Astrocyte of the cerebellum (primary cell): ENCODE measurements at regions of chr12 and their contacts with region 1.

Region 1: DNA sequence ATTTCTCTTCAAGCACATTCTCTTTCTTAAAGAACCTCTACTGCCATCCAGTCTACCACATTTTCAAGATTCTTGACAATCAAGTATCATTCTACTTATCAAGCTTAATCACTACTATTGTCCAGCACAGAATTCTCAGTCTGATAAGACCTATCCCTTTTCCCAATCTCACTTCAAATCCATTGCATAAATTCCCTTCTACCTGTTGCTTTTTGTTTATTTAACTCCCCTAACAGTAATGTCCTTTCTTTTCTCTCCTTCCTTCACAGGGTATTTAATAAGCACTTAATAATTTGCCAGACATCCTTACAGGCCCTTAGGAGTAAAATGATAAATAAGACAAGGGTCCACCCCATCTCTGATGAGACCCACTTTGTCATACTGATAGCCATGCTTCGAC is 41.7 kb downstream of the ZFC3H1 start:
- DNase-seq: no peak
- H3K4me3 ChIP-seq: no peak overlapping the region
- CTCF ChIP-seq: no peak

Region 2: GRCh38 chr12:71652656-71653055 is 30.7 kb after region 1 on chr12:
- in situ Hi-C with region 1: no loop called
- DNase-seq: no peak
- H3K4me3 ChIP-seq: no peak overlapping the region
- CTCF ChIP-seq: no peak

Region 3: GRCh38 chr12:71663561-71664294 is 41.8 kb after region 1 on chr12 and contains the start of gene ZFC3H1:
- in situ Hi-C with region 1: loop called (anchors 5 kb)
- DNase-seq: peak; percentile 99
- H3K4me3 ChIP-seq: peak within 1 kb of the TSS; percentile 73
- CTCF ChIP-seq: peak; percentile 45

Region 4: DNA sequence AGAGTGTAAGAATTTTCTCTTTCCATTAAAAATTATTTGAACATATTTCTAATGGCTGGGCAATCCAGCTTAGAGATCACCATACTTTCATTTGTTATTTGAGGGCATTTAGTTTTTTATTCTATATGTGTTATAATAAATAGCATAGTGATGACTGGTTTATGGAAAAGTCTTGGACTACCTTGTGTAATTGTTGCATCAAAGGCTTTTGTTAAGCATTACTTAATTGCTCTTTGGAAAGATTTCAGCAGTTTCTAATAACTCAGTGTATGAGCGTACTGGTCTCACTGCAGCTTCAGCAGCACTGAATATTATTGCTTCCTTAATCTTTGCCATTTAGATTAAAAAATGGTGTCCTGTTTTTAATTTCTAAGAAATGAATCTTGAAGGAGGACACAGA is 86.7 kb after region 1 on chr12:
- in situ Hi-C with region 1: no loop called
- DNase-seq: no peak
- H3K4me3 ChIP-seq: no peak overlapping the region
- CTCF ChIP-seq: no peak

Region 5: DNA sequence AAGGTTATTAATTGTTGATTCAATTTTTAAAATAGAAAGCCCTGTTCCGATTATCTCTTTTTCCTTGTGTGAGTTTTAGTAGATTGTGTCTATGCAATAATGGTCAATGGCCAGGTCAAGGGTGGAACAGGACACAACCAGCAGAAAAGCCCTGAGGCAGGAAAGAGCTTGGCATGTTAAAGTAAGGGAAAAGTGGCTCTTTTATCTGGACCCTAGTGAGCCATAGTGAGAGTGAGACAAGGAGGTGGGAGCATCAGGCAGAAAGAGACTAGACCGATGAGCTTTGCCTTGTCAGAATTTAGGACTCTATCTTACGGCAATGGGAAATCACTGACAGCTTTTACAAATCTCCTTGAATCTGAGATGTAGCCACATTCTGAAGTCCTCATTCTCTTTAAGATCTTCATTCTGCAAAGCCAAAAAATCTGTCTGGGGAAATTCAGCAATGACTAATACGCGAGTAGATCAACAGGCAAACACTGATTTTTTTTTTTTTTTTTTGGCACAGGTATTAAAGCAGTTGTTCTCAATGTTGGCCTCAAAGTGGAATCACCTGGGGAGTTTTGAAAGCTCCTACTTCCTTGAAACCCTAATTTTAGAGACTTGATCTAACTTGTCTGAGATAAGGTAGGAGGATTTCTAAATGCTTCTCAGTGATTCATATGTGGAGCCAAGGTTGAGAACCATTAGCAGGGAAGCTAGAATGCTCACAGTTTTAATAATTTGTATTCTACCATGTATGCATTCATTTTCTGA is 97.9 kb after region 1 on chr12:
- in situ Hi-C with region 1: loop called (anchors 5 kb)
- DNase-seq: no peak
- H3K4me3 ChIP-seq: no peak overlapping the region
- CTCF ChIP-seq: no peak

Region 6: GRCh38 chr12:72289633-72290032 is 667.7 kb after region 1 on chr12:
- in situ Hi-C with region 1: no loop called
- DNase-seq: no peak
- H3K4me3 ChIP-seq: no peak overlapping the region
- CTCF ChIP-seq: no peak